Activated naive CD4-positive, alpha-beta T cell treated with anti-CD3 and anti-CD28 coated beads, Interleukin-2, amount 10 ng/mL, durations not matched to agents 7 days and 5 days (primary cell): ENCODE measurements at regions of chr12 and their contacts with region 1.

Region 1: GRCh38 chr12:108618079-108618952 is 15.4 kb downstream of the SELPLG start:
- DNase-seq: peak; percentile 78
- H3K4me3 Mint-ChIP-seq: no peak overlapping the region
- H3K27ac Mint-ChIP-seq: peak overlapping the region; percentile 83
- H3K4me1 Mint-ChIP-seq: peaks cover 66% of the 10 kb centered on the region
- H3K27me3 Mint-ChIP-seq: no peaks in the 10 kb centered on the region

Region 2: GRCh38 chr12:108562348-108563135 is 55.8 kb before region 1 on chr12 and contains the start of gene ISCU:
- CTCF ChIA-PET with region 1: interaction called, 268 read pairs
- DNase-seq: peak; percentile 99
- H3K4me3 Mint-ChIP-seq: peak within 1 kb of the TSS; percentile 98
- H3K27ac Mint-ChIP-seq: peak within 1 kb of the TSS; percentile 97
- H3K4me1 Mint-ChIP-seq: peaks cover 66% of the 10 kb centered on the region
- H3K27me3 Mint-ChIP-seq: no peaks in the 10 kb centered on the region

Region 3: DNA sequence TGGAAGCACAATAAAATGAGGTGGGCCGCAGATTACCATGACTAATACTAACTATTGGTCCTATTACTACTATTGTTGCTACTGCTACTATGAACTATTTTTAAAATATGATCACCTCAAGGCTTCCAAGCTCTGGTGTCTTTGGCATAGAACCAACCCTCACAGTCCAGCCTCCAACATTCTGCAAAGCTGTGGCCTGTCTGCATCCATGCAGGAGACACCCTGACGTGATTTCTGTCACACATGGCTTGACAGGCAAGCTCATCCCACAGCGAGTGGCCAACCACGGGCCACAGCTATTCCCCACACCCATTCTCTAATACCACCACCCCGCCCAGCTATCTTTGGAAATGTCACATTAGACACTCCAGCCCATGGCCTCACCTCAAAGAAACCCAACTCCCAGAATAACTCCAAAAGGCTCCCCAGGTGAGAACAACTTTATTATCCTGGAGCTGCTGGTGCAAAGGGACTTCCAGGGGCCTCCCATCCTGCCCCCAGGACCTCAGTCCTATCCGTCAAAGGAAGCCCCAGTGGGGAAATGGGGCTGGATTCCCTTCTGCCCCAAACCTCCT is 41.6 kb before region 1 on chr12:
- CTCF ChIA-PET with region 1: interaction called, 268 read pairs
- DNase-seq: no peak
- H3K4me3 Mint-ChIP-seq: no peak overlapping the region
- H3K27ac Mint-ChIP-seq: no peak overlapping the region
- H3K4me1 Mint-ChIP-seq: peaks cover 37% of the 10 kb centered on the region
- H3K27me3 Mint-ChIP-seq: peaks cover 14% of the 10 kb centered on the region

Region 4: GRCh38 chr12:108633534-108634248 is 15.4 kb after region 1 on chr12 and contains the start of gene SELPLG:
- CTCF ChIA-PET with region 1: interaction called, 160 read pairs
- DNase-seq: peak; percentile 94
- H3K4me3 Mint-ChIP-seq: peak within 1 kb of the TSS; percentile 100
- H3K27ac Mint-ChIP-seq: peak within 1 kb of the TSS; percentile 100
- H3K4me1 Mint-ChIP-seq: peaks cover 66% of the 10 kb centered on the region
- H3K27me3 Mint-ChIP-seq: peaks cover 3% of the 10 kb centered on the region

Region 5: DNA sequence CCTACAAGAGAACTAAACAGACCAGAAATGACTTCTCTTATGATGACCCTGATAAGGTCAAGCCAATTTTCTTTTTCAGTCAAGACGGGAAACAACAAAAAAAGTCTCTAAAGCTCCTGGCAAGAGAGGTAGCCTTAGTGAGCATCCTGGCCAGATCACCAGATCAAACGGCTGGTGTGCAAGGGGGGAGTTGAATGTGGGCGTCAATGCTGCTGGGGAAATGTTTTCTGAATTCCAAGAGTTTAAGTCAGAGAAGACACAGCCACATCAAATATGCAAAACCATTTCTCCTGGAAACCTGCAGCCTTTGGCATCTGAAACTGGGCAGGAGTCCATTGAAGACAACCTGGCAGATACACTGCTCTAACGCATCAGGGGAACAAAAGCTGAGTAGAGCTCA is 31.4 kb after region 1 on chr12:
- CTCF ChIA-PET with region 1: interaction called, 23 read pairs
- DNase-seq: no peak
- H3K4me3 Mint-ChIP-seq: no peak overlapping the region
- H3K27ac Mint-ChIP-seq: no peak overlapping the region
- H3K4me1 Mint-ChIP-seq: peaks cover 33% of the 10 kb centered on the region
- H3K27me3 Mint-ChIP-seq: no peaks in the 10 kb centered on the region

Region 6: GRCh38 chr12:108803428-108804105 is 185.3 kb after region 1 on chr12:
- CTCF ChIA-PET with region 1: interaction called, 22 read pairs
- DNase-seq: peak; percentile 75
- H3K4me3 Mint-ChIP-seq: no peak overlapping the region
- H3K27ac Mint-ChIP-seq: peak overlapping the region; percentile 76
- H3K4me1 Mint-ChIP-seq: peaks cover 4% of the 10 kb centered on the region
- H3K27me3 Mint-ChIP-seq: no peaks in the 10 kb centered on the region

Region 7: DNA sequence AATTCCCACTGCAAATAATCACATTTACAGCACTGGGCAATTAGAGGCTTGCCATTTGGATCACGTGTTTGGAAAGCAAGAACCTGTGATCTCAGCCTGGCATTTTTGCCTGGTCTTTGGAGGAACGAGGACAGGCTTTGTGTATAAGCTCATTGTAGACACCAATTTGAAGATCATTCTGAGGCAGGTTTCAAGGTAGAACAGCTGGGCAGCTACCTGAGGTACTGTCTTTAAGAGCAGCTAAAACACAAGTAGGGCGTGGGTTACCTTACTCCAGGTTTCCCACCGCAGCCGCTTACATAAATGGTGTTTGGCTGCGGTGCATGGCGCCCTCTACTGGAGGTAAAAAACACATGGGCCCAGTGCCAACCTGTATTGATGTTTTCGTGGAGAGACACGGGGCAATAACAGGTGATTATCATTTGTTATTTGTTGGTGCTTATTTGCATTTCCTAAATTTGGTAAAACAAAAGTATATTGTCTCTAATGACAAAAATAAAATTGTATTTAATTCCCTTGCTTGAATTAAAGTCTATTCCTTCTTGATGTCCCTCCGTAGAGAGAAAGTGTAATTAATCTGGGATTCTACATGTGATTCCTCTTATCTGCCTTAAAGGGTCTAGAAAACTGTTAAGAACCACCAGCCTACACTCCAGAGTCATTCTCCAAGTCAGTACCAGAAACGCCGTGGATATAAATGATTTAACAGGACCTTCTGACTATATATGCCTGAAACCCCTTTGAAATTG is 332.8 kb after region 1 on chr12:
- CTCF ChIA-PET with region 1: interaction called, 11 read pairs
- DNase-seq: peak; percentile 81
- H3K4me3 Mint-ChIP-seq: no peak overlapping the region
- H3K27ac Mint-ChIP-seq: no peak overlapping the region
- H3K4me1 Mint-ChIP-seq: peaks cover 2% of the 10 kb centered on the region
- H3K27me3 Mint-ChIP-seq: peaks cover 23% of the 10 kb centered on the region